Endothelial cell of umbilical vein (primary cell): ENCODE measurements at regions of chr20 and their contacts with region 1.

Region 1: DNA sequence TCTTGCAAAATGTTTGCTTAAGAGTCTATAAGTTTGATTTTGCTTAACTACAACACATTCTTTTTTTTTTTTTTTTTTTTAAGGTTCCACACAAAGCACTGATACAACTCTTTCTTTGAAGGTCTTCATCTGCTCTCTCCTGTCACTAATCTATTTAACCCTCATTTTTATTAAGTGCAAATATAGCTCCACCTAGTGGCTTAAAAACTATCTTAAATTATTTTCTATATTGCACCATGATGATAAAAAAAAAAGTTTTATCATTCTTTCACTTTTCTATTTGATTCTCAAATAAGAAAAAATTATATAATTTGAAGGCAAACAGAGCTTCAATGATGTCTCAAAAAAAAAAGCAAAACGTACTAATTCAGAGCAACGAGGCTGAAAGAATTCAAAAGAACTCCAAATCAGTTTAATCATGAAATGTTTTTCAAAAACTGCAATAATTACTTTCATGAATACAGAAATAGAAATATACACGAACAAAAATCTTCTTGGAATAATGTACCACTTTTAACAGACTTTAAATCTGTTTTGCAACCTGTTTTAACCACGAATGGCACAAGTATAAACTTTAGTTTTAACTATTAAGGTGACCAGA is 12.8 kb downstream of the ESF1 start:
- DNase-seq: peak; percentile 31
- H3K4me3 ChIP-seq: no peak overlapping the region
- H3K27ac ChIP-seq: peak overlapping the region; percentile 34
- H3K4me1 ChIP-seq: peaks cover 14% of the 10 kb centered on the region
- H3K27me3 ChIP-seq: no peaks in the 10 kb centered on the region
- CTCF ChIP-seq: peak; percentile 8 to 16
- POLR2A ChIP-seq: no peak

Region 2: DNA sequence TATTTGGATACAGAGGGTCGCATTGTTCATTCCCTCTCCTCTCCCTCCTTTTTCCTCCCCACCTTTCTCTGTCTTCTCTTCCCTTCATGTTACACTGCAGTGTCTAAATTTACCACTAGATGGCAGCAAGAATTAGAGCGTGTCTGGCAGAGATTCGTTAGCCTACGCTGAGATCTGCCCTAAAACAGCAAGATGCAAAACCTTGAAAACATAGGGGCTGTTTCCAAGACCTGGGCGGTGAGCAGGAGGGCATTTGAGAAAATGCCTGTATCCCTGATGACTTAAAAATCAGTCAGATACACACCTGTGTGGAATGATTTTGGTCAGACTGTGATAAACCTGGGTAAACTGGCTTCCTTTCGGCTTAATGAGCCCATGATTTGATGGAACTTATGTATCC is 652.4 kb before region 1 on chr20:
- CTCF ChIA-PET with region 1: interaction called, 6 read pairs
- POLR2A ChIA-PET with region 1: no interaction called
- dilution Hi-C with region 1: no loop called
- intact Hi-C with region 1: loop called (anchors 1 kb)
- DNase-seq: peak; percentile 64
- H3K4me3 ChIP-seq: no peak overlapping the region
- H3K27ac ChIP-seq: no peak overlapping the region
- H3K4me1 ChIP-seq: no peaks in the 10 kb centered on the region
- H3K27me3 ChIP-seq: no peaks in the 10 kb centered on the region
- CTCF ChIP-seq: peak; percentile 68 to 76
- POLR2A ChIP-seq: no peak

Region 3: DNA sequence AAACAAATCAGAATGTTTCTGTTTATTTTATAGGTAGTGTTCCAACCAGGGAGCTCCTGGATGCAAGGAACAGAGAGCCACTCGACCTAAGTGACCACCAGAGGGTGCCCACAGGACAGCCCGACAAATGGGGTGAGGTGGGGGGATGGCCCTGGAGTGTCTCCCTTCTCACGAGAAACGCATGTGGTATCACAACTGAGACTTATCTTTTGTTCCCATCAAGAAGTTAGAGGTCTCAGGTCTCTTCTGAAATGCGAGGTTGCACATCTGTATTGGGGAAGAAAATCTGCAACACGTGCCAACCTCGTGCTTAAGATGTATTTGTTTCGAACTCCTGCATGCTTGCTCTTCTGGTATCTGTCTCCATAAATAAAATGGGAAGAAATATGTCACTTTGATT is 446.9 kb before region 1 on chr20:
- CTCF ChIA-PET with region 1: interaction called, 30 read pairs
- POLR2A ChIA-PET with region 1: no interaction called
- dilution Hi-C with region 1: no loop called
- intact Hi-C with region 1: loop called (anchors 2 kb)
- DNase-seq: peak; percentile 32
- H3K4me3 ChIP-seq: no peak overlapping the region
- H3K27ac ChIP-seq: no peak overlapping the region
- H3K4me1 ChIP-seq: no peaks in the 10 kb centered on the region
- H3K27me3 ChIP-seq: peaks cover 10 to 19% of the 10 kb centered on the region in 2 experiments
- CTCF ChIP-seq: peak; percentile 30 to 58
- POLR2A ChIP-seq: no peak

Region 4: DNA sequence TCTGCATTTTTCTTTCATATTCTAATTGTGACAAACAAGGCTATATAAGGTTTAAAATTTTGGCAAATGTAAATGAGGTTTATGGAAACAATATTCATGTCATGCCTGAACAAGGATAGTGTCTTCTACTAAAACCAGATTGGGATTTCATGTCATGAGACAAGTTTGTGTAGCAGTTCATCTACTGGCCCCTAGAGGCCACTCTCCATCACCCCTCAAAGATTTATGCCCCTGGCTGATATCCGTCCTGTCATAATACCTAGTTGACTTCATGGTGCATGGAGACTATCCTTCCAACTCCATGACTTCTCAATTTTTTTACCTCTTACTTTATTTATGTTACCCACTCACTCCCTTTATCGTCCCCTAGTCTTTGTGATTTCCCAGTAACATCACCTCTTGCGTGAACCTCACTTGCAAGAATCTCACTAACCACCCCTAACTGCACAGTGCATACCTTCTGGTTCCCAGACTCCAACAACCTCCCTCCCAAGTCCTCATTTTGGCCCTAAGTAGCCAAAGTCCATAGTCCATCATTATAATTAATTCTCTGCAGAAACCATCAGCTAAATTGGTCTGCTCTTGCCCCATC is 313.0 kb before region 1 on chr20:
- CTCF ChIA-PET with region 1: interaction called, 9 read pairs
- POLR2A ChIA-PET with region 1: no interaction called
- dilution Hi-C with region 1: no loop called
- intact Hi-C with region 1: loop called (anchors 5 kb)
- DNase-seq: peak; percentile 35
- H3K4me3 ChIP-seq: no peak overlapping the region
- H3K27ac ChIP-seq: no peak overlapping the region
- H3K4me1 ChIP-seq: no peaks in the 10 kb centered on the region
- H3K27me3 ChIP-seq: no peaks in the 10 kb centered on the region
- CTCF ChIP-seq: peak; percentile 72 to 74
- POLR2A ChIP-seq: no peak

Region 5: GRCh38 chr20:13723011-13723410 is 48.9 kb before region 1 on chr20:
- CTCF ChIA-PET with region 1: no interaction called
- POLR2A ChIA-PET with region 1: no interaction called
- dilution Hi-C with region 1: no loop called
- intact Hi-C with region 1: no loop called
- DNase-seq: no peak
- H3K4me3 ChIP-seq: no peak overlapping the region
- H3K27ac ChIP-seq: no peak overlapping the region
- H3K4me1 ChIP-seq: no peaks in the 10 kb centered on the region
- H3K27me3 ChIP-seq: no peaks in the 10 kb centered on the region
- CTCF ChIP-seq: no peak
- POLR2A ChIP-seq: no peak

Region 6: GRCh38 chr20:13758884-13759283 is 13.1 kb before region 1 on chr20:
- CTCF ChIA-PET with region 1: interaction called, 31 read pairs
- POLR2A ChIA-PET with region 1: no interaction called
- dilution Hi-C with region 1: no loop called
- intact Hi-C with region 1: no loop called
- DNase-seq: no peak
- H3K4me3 ChIP-seq: no peak overlapping the region
- H3K27ac ChIP-seq: no peak overlapping the region
- H3K4me1 ChIP-seq: no peaks in the 10 kb centered on the region
- H3K27me3 ChIP-seq: no peaks in the 10 kb centered on the region
- CTCF ChIP-seq: no peak
- POLR2A ChIP-seq: no peak

Region 7: DNA sequence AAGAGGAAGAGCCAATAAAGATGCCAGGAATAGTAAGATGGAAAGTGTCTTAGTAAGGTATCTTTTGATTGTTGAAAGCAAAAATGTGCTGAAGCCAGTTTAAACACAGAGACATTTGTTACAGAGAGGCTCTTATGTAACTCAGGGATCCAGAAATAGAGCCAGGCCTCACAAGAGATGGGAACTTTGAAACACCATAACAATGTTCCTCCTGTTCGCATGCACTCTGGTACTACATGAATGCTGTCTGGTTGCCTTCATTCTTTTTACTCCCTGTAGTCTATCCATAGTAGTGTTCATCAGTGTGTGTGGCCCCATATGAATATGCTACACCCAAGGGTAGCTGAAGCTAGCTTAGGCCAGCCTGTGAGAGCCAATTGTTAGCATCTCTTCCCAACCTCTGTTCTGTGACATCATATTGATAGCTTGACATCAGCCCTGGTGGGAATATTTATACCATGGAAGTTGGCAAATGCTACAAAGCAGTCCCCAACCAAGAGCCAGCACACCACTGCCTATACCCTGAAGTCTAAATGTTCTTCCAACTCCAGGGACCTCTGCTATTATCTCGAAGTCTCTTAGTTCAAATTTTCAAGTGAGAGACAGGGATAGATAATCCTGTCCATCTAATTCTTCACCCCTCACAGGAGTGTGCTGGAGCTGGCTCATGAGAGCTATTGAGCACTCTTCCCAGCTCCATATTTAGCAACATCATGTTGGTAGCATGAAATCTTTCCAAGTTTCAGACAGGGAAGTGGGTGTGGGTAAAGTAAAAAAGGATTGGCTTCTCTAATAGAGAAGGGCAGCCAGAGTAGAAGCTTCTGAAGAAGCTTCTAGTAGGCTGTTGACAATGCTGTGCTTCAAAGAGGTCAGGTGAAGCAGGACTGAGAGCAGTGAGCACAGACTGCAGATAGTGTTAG is 19.8 kb after region 1 on chr20:
- CTCF ChIA-PET with region 1: interaction called, 38 read pairs
- POLR2A ChIA-PET with region 1: no interaction called
- dilution Hi-C with region 1: no loop called
- intact Hi-C with region 1: no loop called
- DNase-seq: no peak
- H3K4me3 ChIP-seq: no peak overlapping the region
- H3K27ac ChIP-seq: no peak overlapping the region
- H3K4me1 ChIP-seq: peaks cover 2% of the 10 kb centered on the region
- H3K27me3 ChIP-seq: no peaks in the 10 kb centered on the region
- CTCF ChIP-seq: no peak
- POLR2A ChIP-seq: no peak

Region 8: DNA sequence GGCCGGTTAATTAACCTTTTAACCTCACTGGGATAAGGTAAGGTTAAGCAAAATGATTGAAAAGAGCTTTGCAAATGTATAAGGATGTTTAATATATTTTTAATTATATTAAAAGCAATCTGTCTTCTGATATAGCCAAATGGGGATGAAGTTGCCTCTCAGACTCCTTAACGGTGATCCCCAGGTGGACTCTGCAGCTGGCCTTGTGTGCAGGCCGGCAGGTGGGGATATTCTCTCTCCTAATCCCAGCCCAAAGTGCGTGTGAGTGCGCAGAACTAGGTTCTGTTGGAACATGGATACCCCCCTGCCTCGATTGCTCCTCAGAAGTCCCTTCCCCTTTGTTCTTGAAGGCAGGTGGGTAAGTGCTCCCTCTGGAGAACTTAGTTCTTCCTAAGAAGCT is 112.8 kb after region 1 on chr20:
- CTCF ChIA-PET with region 1: no interaction called
- POLR2A ChIA-PET with region 1: no interaction called
- dilution Hi-C with region 1: no loop called
- intact Hi-C with region 1: no loop called
- DNase-seq: no peak
- H3K4me3 ChIP-seq: no peak overlapping the region
- H3K27ac ChIP-seq: no peak overlapping the region
- H3K4me1 ChIP-seq: no peaks in the 10 kb centered on the region
- H3K27me3 ChIP-seq: no peaks in the 10 kb centered on the region
- CTCF ChIP-seq: no peak
- POLR2A ChIP-seq: no peak

Region 9: GRCh38 chr20:14142171-14142570 is 370.2 kb after region 1 on chr20:
- CTCF ChIA-PET with region 1: no interaction called
- POLR2A ChIA-PET with region 1: no interaction called
- dilution Hi-C with region 1: no loop called
- intact Hi-C with region 1: no loop called
- DNase-seq: peak; percentile 1
- H3K4me3 ChIP-seq: no peak overlapping the region
- H3K27ac ChIP-seq: no peak overlapping the region
- H3K4me1 ChIP-seq: no peaks in the 10 kb centered on the region
- H3K27me3 ChIP-seq: no peaks in the 10 kb centered on the region
- CTCF ChIP-seq: no peak
- POLR2A ChIP-seq: no peak